Activated CD4-positive, alpha-beta T cell treated with anti-CD3 and anti-CD28 coated beads, Interleukin-2, amount 10 ng/mL, durations not matched to agents 24 days and 14 days (primary cell): ENCODE measurements at regions of chr4 and their contacts with region 1.

Region 1: DNA sequence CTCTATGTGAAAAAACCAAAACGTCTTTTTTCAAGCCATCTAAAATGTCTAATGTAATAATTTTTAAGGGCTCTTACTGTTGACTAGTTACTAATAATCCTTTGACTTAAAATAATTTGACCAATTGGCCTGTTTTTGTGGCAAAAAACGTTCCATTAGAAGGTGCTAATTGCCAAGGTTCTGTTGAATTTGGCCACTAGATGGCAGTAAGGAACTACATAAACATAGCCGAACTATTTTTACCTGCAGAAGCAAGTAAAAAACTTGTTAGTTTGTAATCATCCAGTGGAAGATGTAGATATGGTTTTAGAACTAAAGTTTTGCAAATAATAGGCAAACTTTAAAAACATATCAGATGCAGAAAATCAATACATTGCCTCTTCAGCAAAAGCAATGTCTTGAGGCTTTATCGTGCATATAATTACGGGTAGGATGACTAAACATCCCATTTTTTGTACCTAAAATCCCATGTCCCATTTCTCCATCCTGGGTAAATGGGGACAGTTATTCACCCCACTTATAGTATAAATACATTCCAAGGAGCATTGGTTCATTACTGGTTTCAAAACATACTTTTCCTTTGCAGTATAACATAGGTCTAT is 57.6 kb downstream of the PROM1 start:
- DNase-seq: peak; percentile 80
- H3K4me3 Mint-ChIP-seq: no peak overlapping the region
- H3K27ac Mint-ChIP-seq: no peak overlapping the region
- H3K4me1 Mint-ChIP-seq: no peaks in the 10 kb centered on the region
- H3K27me3 Mint-ChIP-seq: peaks cover 21% of the 10 kb centered on the region

Region 2: DNA sequence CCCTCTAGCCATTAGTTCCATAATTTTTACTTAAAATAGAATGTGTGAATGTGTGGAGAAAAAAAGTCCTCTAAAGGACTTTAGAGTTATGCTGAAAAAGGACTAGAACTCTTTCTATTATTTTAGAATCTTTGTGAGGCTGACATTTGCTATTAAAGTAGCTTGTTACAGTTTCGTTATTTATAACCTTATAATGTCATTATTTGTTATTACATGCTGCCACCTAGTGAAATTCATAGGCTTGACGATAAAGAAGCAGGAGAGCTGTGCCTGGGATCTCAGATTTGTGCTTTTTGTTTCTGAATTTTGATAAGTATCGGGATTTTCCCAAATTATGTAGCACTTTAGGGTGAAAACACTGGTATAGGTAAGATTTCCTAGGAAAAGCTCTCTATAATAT is 238.5 kb after region 1 on chr4:
- intact Hi-C with region 1: loop called (anchors 1 kb)
- DNase-seq: no peak
- H3K4me3 Mint-ChIP-seq: no peak overlapping the region
- H3K27ac Mint-ChIP-seq: no peak overlapping the region
- H3K4me1 Mint-ChIP-seq: peaks cover 2% of the 10 kb centered on the region
- H3K27me3 Mint-ChIP-seq: peaks cover 2% of the 10 kb centered on the region

Region 3: DNA sequence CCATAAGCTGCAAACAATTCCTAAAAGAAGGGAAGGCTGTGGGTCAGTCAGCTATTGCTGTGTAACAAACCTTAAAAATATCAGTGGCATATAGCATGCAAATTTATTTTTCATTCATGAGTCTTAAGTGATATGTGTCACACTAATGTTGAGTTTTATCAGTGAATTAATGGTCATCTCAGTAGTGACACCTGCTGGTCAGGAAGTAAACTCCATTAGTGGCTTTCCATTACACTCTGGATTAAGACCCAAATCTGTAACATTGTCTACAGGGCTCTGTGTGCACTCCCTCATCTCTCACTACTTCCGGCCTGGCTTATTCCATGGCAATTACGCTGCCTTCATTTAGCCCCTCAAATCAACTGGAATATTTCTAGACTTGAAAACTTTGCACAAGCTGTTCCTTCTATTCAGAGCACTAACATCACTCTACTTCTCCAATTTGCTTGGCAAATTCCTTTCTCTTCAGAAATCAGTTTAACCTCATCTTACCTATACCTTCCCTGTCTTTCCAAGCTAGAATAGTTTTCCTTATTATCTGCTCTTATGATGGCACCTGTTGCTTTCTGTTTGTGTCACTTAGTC is 417.3 kb after region 1 on chr4:
- intact Hi-C with region 1: loop called (anchors 5 kb)
- DNase-seq: peak; percentile 56
- H3K4me3 Mint-ChIP-seq: no peak overlapping the region
- H3K27ac Mint-ChIP-seq: no peak overlapping the region
- H3K4me1 Mint-ChIP-seq: no peaks in the 10 kb centered on the region
- H3K27me3 Mint-ChIP-seq: no peaks in the 10 kb centered on the region